ENCODE measurements at regions of chr1 and their contacts with region 1.

Region 1: DNA sequence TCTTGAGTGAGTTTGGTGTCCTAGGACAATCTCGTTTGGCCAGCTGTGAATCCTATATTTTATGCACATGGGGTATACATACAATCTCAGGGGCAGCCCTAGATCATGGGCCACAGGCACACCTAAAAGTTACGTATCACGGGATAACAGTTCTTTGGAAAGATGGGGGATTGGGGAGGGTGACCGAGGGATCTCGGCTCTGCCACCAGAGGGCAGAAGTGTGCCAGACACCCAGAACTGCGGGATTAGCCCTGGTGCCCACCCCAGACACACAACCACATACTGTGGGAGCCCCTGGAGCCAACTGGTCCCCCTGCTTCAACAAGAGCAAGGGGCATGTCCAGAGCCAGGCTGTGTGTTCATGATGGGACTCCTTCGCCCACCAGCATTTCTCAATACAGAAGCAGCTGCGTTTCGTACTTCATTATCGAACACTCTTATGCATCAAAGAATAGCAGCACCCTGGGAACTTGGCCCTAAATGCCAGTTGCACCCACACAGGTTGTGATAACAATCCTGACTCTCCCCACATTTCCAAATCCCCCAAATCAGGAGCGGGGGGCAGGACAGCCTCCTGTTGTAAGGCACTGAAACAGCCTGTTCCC is 37.4 kb downstream of the TMCO4 start:
- DNase-seq: peak in 1 of 2 experiments; percentile 37
- H3K4me3 ChIP-seq: no peak overlapping the region
- H3K4me3 Mint-ChIP-seq: no peak overlapping the region
- H3K27ac Mint-ChIP-seq: no peak overlapping the region
- H3K4me1 ChIP-seq: no peaks in the 10 kb centered on the region
- H3K4me1 Mint-ChIP-seq: no peaks in the 10 kb centered on the region
- H3K27me3 ChIP-seq: no peaks in the 10 kb centered on the region
- H3K27me3 Mint-ChIP-seq: no peaks in the 10 kb centered on the region
- CTCF ChIP-seq: peak; percentile 59 to 72

Region 2: DNA sequence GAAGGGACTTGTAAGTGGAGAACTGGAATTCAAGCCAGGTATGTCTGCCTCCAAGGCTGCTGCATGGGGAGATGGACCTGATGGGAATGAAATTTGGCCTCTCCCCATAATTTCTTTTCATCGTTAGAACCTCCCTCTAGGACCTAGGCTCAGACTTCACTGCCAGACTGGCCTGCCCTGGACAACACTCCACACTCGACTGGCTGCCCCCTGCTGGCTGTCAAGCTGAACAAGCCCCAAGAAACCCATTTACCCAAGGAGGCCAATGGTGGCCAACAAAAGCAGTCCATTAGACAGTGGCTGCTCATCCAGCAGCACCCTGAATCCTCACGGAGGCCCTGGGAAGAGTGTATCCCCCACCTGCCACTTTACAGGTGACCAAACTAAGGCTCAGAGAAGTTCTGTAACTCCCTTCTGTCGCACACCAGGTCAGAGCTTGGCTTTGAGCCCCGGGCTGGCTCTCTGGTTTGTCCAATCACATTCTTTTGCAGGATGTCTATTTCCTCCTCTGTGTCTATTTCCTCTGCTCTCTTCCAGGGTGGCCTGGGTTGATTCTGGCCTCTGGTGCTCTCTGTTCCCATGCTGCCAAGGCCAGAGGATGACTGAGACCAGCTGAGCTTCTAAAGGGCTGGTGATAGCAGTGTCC is 49.1 kb after region 1 on chr1:
- CTCF ChIA-PET with region 1: no interaction called
- POLR2A ChIA-PET with region 1: no interaction called
- intact Hi-C with region 1: loop called (anchors 2 kb)
- DNase-seq: peak in 1 of 2 experiments; percentile 29
- H3K4me3 ChIP-seq: no peak overlapping the region
- H3K4me3 Mint-ChIP-seq: no peak overlapping the region
- H3K27ac Mint-ChIP-seq: no peak overlapping the region
- H3K4me1 ChIP-seq: peaks cover 17% of the 10 kb centered on the region
- H3K4me1 Mint-ChIP-seq: peaks cover 8% of the 10 kb centered on the region
- H3K27me3 ChIP-seq: no peaks in the 10 kb centered on the region
- H3K27me3 Mint-ChIP-seq: no peaks in the 10 kb centered on the region
- CTCF ChIP-seq: peak; percentile 24 to 35

Region 3: DNA sequence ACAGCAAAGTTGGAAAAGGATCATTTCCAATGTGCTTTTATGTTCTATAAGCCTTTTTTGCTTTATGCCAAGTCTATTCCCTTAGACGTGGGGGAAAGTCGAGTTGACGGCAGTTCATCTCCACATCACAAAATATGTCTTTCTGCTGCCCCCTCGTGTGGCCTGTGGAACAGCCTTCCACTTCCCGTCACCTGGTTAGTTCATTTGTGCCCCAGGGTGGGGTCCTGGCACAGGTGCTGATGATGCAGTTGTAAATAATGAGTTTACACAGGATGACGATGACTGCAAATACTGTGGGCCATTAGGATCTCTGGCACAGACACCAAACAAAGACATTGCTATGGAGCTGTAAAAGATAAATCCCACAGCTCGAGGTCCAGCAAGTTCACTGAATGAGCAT is 109.9 kb after region 1 on chr1:
- CTCF ChIA-PET with region 1: no interaction called
- POLR2A ChIA-PET with region 1: no interaction called
- intact Hi-C with region 1: loop called (anchors 1 kb)
- DNase-seq: peak; percentile 45 to 49
- H3K4me3 ChIP-seq: no peak overlapping the region
- H3K4me3 Mint-ChIP-seq: no peak overlapping the region
- H3K27ac Mint-ChIP-seq: no peak overlapping the region
- H3K4me1 ChIP-seq: peaks cover 16% of the 10 kb centered on the region; the same call in 1 of the 2 replicates
- H3K4me1 Mint-ChIP-seq: no peaks in the 10 kb centered on the region
- H3K27me3 ChIP-seq: no peaks in the 10 kb centered on the region
- H3K27me3 Mint-ChIP-seq: no peaks in the 10 kb centered on the region
- CTCF ChIP-seq: peak in 1 of 2 experiments; percentile 46

Region 4: DNA sequence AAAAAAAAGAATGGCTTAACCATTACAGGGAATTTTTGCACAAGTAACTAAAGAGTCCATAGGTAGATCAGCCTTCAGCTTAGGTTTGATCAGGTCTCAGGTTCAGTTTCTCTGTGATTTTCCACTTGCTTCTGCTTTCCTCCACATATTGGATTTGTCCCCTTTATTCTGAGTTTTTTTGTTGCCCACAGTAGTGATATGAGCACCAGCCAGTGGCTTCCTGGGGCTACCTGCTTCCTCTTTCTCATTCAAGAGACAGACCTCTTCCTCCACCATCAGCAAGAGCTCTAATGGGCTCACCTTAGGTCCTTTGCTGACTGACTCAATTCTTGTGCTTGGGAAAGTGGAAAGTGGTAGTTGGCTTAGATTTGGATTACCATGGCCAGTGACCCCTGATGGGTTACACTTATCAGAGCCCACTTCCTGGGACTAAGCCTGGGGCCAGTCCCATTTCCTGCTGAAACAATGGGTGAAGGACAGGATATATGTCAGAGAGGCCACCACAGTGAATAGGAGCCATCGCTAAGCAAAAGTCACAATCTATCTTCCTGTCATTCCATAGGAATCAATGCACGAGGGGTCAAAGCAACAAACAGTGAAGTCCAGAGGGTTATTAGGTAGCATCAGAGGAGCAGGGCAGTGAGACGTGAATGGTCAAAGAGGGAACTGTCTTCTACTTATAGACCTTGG is 173.9 kb after region 1 on chr1:
- CTCF ChIA-PET with region 1: no interaction called
- POLR2A ChIA-PET with region 1: no interaction called
- intact Hi-C with region 1: no loop called
- DNase-seq: no peak
- H3K4me3 ChIP-seq: no peak overlapping the region
- H3K4me3 Mint-ChIP-seq: no peak overlapping the region
- H3K27ac Mint-ChIP-seq: no peak overlapping the region
- H3K4me1 ChIP-seq: no peaks in the 10 kb centered on the region
- H3K4me1 Mint-ChIP-seq: no peaks in the 10 kb centered on the region
- H3K27me3 ChIP-seq: no peaks in the 10 kb centered on the region
- H3K27me3 Mint-ChIP-seq: no peaks in the 10 kb centered on the region
- CTCF ChIP-seq: no peak